Posterior vena cava (tissue), 2 donors: ENCODE measurements at regions of chr14 and their contacts with region 1.

Region 1: GRCh38 chr14:20019257-20019865 is at the start of gene OR4K14:
- DNase-seq: no peak
- total RNA-seq, gene OR4K14: not detected

Region 2: GRCh38 chr14:19895282-19895681 is 124.1 kb before region 1 on chr14:
- intact Hi-C with region 1: no loop called
- DNase-seq: no peak

Region 3: GRCh38 chr14:20167091-20167490 is 147.7 kb after region 1 on chr14:
- intact Hi-C with region 1: no loop called
- DNase-seq: no peak

Region 4: GRCh38 chr14:20873370-20874177 is 854.2 kb after region 1 on chr14:
- intact Hi-C with region 1: no loop called
- DNase-seq: peak; percentile 96

Region 5: GRCh38 chr14:21467616-21468015 is 1448.3 kb after region 1 on chr14:
- intact Hi-C with region 1: loop called in 1 of 2 experiments (anchors 10 kb)
- DNase-seq: no peak

Region 6: DNA sequence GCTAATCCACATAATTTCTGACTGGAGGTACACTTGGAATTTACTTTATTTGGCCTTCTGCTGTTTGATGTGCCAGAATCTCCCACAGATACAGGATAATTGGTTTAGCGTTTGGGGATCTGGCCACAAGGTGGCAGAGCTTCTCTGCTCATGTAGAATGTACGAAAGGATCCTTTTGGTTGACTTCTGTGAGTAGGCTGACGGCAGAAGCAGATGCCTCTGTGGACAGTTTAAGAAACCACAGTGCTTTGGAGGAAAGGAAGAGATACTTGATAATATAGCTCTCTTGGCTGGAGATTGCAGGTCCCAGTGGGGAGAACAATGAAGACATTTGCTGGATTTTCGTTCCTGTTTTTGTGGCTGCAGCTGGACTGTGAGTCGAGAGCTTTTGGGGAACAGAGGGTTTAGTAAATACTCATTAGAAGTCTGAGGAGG is 1729.5 kb after region 1 on chr14:
- intact Hi-C with region 1: no loop called
- DNase-seq: no peak